ENCODE measurements at regions of chr12 and their contacts with region 1.

Region 1: GRCh38 chr12:22443379-22444316 is 100.7 kb downstream of the C2CD5 start:
- DNase-seq: peak; percentile 72 to 83 (median 74)
- H3K4me3 ChIP-seq: no peak overlapping the region
- H3K4me3 Mint-ChIP-seq: no peak overlapping the region
- H3K27ac ChIP-seq: no peak overlapping the region
- H3K27ac Mint-ChIP-seq: no peak overlapping the region
- H3K4me1 ChIP-seq: no peaks in the 10 kb centered on the region
- H3K4me1 Mint-ChIP-seq: peaks cover 2% of the 10 kb centered on the region
- H3K27me3 ChIP-seq: no peaks in the 10 kb centered on the region
- H3K27me3 Mint-ChIP-seq: peaks cover 3 to 9% (median 5%) of the 10 kb centered on the region in 3 donors
- CTCF ChIP-seq: peak; percentile 90

Region 2: GRCh38 chr12:21697904-21698630 is 745.6 kb before region 1 on chr12:
- intact Hi-C with region 1: loop called in 1 of 2 experiments (anchors 5 kb)
- DNase-seq: peak in 1 of 3 donors; percentile 2
- H3K4me3 ChIP-seq: no peak overlapping the region
- H3K4me3 Mint-ChIP-seq: peak overlapping the region in 1 of 2 donors; percentile 61
- H3K27ac ChIP-seq: no peak overlapping the region
- H3K27ac Mint-ChIP-seq: no peak overlapping the region
- H3K4me1 ChIP-seq: peaks cover 0 to 3% of the 10 kb centered on the region in 2 donors
- H3K4me1 Mint-ChIP-seq: peaks cover 7% of the 10 kb centered on the region
- H3K27me3 ChIP-seq: no peaks in the 10 kb centered on the region
- H3K27me3 Mint-ChIP-seq: no peaks in the 10 kb centered on the region
- CTCF ChIP-seq: peak; percentile 65

Region 3: GRCh38 chr12:22100958-22101748 is 342.5 kb before region 1 on chr12:
- intact Hi-C with region 1: loop called in 1 of 2 experiments (anchors 5 kb)
- DNase-seq: peak; percentile 66 to 86 (median 72)
- H3K4me3 ChIP-seq: no peak overlapping the region
- H3K4me3 Mint-ChIP-seq: no peak overlapping the region
- H3K27ac ChIP-seq: no peak overlapping the region
- H3K27ac Mint-ChIP-seq: peak overlapping the region in 1 of 7 donors; percentile 30
- H3K4me1 ChIP-seq: peaks cover 9 to 12% of the 10 kb centered on the region in 2 donors
- H3K4me1 Mint-ChIP-seq: peaks cover 9% of the 10 kb centered on the region
- H3K27me3 ChIP-seq: no peaks in the 10 kb centered on the region
- H3K27me3 Mint-ChIP-seq: no peaks in the 10 kb centered on the region
- CTCF ChIP-seq: peak; percentile 64

Measured in CD14-positive monocyte (primary cell).